HEK293T (cell line): ENCODE measurements at regions of chr17 and their contacts with region 1.

Region 1: DNA sequence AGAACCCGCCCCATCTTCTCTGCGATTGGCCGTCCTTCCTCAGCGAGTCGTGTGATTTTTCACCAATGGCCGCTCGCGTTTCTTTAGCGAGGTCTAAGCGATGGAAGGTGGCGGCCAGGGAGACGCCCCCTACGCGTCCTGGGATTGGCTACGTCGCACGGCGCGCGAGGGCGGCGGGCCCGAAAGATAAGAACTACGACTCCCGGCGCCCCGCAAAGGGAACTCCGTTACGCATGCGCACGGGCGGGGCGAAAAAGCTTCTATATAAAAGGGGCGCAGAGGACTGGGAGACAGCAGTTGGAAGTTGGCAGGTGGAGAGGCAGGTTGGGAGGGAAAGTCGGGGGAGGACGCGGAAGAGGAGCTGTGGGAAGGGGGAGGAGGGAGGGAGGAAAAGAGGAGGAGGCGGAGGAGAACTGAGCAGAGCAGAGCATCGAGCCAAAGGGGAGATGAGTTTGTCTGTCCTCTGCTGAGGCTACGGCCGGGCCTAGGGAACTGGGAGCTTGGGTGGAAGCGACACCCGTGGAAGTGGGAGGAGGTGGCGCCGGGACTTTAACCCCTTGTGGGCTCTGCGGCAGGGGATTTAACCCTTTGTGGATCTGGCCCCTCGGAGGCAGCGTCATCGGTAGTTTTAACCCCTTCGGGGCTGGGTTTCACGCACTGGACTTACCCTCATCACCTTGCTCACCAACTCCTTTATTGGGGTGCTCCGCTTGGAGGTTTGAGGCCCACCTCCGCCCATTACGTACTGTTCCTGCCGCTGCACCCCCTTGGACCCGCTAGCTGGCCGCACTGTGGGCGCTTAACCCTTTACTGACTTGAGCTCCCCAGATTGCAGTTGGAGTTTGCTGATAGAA is at the start of gene HEXIM1:
- DNase-seq: peak; percentile 95

Region 2: GRCh38 chr17:45161019-45161825 is 12.8 kb after region 1 on chr17:
- CTCF ChIA-PET with region 1: interaction called, 39 read pairs
- POLR2A ChIA-PET with region 1: interaction called, 345 read pairs
- DNase-seq: peak; percentile 95

Region 3: GRCh38 chr17:45172454-45173286 is 24.3 kb after region 1 on chr17:
- CTCF ChIA-PET with region 1: interaction called, 15 read pairs
- POLR2A ChIA-PET with region 1: interaction called, 65 read pairs
- DNase-seq: no peak

Region 4: GRCh38 chr17:45184144-45184543 is 35.7 kb after region 1 on chr17:
- CTCF ChIA-PET with region 1: no interaction called
- POLR2A ChIA-PET with region 1: interaction called, 12 read pairs
- DNase-seq: no peak

Region 5: GRCh38 chr17:45190503-45191255 is 42.3 kb after region 1 on chr17:
- CTCF ChIA-PET with region 1: interaction called, 6 read pairs
- POLR2A ChIA-PET with region 1: interaction called, 15 read pairs
- DNase-seq: no peak

Region 6: DNA sequence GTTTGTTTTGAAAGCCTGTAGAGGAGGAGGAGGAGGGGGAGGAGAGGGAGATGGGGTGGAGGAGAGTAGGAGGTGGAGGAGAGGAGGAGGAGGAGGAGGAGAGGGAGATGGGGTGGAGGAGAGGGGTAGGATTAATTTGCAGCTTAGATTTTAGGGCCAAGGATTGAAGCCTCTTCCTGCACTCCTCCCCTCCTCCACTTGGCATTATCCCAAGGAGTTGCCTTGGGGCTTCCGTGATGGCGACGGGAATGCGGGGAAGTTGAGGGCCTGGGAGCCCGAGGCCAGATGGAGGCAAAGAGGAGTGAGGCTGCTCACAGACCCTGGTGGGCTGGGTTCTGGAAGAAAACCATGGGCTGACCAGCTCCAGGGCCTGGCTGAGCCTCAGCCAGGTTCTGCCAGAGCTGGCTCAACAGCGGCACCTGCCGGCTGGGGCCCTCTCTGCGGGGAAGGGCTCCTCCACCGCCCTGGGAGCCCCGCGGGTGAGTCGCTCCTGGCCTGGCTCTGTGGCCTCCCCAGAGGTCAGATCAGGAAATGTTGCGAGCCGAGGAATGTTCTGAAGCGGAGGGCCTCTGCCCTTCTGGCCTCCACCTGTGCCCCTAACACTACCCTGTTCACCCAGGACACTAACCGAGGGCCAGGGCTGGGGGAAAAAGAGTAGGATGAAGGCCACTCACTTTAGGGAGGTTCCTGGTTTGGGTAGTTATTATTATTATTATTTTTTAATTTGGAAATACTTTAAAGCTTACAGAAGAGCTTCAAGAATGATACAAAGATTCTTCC is 49.3 kb after region 1 on chr17:
- CTCF ChIA-PET with region 1: interaction called, 85 read pairs
- POLR2A ChIA-PET with region 1: interaction called, 117 read pairs
- DNase-seq: peak; percentile 94

Region 7: GRCh38 chr17:45347444-45347843 is 199.0 kb after region 1 on chr17:
- CTCF ChIA-PET with region 1: no interaction called
- POLR2A ChIA-PET with region 1: no interaction called
- DNase-seq: no peak